Esophagus muscularis mucosa (tissue), 4 donors: ENCODE measurements at regions of chr4 and their contacts with region 1.

Region 1: DNA sequence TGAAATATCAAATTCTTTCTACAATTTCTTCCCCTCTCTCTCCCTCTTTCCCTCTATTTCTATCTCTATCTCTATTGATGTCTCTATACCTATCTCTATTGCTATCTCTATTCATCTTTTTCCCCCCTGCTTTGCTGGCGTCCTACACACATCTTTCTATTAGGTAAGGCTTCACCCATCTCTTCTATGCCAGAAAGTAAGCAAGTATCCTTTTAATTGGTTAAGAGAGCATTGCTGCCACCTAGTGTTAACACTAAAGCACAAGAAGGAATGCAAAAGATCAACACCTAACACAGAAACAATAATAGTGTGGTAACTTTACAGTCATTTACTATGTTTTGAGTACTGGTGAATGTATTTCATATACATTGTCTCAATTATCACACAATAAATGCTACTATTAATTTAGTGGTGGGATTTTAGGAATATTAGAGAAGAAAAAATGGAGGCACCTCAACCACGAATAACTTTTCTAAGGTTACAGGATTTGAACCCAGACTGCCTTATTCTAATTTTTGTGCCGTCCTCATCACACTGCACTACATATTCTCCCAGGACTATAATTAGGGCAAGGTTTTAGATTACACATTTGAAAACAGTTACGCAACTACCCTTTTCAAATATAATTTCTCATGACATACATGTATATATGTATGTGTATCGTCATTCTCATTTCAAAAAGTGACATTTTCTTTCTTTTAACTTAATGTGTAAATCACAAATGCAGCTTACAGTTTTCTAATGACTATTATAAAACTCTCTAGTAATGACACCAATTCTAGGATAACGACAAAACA is 3.7 kb upstream of the C4orf36 start:
- DNase-seq: no peak
- H3K4me3 ChIP-seq: no peak overlapping the region
- H3K27ac ChIP-seq: no peak overlapping the region
- H3K4me1 ChIP-seq: peaks cover 2 to 20% (median 14%) of the 10 kb centered on the region in 4 donors
- H3K27me3 ChIP-seq: no peaks in the 10 kb centered on the region
- CTCF ChIP-seq: peak; percentile 67 to 71 (median 71)
- EP300 ChIP-seq: no peak
- POLR2A ChIP-seq: no peak

Region 2: DNA sequence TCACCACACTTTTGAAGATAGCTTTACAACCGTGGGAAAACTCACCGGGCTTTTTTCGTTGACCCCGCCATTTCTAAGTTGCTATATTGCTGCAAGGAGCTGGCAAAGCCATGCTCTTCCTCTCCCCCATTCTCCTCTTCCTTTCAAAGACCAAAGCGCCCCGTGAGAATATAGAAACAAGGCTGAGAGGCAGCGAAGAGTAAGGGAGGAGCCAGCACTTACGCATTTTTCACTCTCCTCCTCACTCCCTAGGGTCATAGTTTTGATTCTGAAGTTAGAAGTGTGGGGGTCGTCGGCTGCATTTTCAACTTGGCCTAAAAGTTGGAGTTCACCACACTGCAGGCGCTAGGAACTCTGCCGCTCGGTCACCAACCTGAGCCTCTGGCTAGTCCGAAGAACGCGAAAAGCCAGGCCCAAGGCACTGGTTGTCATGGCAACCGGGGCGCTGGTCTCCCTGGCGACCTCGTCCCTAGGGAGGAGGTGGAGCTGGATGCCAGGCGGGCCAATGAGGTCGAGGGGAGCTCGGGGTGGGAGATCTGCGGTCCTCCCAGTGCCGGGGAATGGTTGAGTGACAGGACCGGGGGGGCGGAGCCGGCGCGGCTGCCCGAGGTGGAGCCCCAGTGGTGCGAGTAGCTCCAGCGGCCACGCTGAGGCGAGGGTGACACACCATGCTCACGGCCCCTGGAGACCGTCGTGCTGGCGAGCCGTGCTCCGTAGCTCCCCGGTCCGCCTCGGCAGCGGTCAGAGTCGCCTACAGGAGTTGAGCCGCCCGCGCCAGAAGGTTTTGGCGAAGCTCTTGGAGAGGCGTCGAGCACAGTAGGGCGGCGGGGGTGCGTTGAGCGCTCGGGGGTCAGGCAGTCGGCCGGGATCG is 302.0 kb before region 1 on chr4 and contains the start of gene PTPN13:
- intact Hi-C with region 1: loop called (anchors 10 kb)
- DNase-seq: peak; percentile 98
- H3K4me3 ChIP-seq: peak within 1 kb of the TSS; percentile 62 to 89 (median 71)
- H3K27ac ChIP-seq: peak within 1 kb of the TSS; percentile 78 to 91 (median 83)
- H3K4me1 ChIP-seq: peaks cover 0 to 52% (median 35%) of the 10 kb centered on the region in 4 donors
- H3K27me3 ChIP-seq: peaks cover 0 to 4% (median 0%) of the 10 kb centered on the region in 4 donors
- CTCF ChIP-seq: no peak
- EP300 ChIP-seq: no peak
- POLR2A ChIP-seq: no peak
- total RNA-seq, gene PTPN13: 7.9 to 13.7 (median 9.4) TPM

Region 3: DNA sequence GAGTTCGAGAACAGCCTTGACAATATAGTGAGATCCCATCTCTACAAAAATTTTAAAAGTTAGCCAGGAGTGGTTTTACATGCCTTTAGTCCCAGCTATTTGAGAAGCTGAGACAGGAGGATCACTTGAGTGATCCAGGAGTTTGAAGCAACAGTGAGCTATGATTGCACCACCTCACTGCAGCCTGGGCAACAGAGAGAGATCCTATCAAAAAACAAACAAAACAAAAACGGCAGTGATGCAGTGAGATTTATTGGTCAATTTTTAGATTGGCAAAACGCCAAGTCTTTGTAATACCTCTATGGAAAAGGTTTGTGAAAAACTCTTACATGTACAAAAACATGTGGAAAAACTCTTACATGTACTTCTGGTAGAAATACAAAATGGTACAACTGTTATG is 210.5 kb before region 1 on chr4:
- intact Hi-C with region 1: no loop called
- DNase-seq: no peak
- H3K4me3 ChIP-seq: no peak overlapping the region
- H3K27ac ChIP-seq: no peak overlapping the region
- H3K4me1 ChIP-seq: no peaks in the 10 kb centered on the region
- H3K27me3 ChIP-seq: no peaks in the 10 kb centered on the region
- CTCF ChIP-seq: no peak
- EP300 ChIP-seq: no peak
- POLR2A ChIP-seq: no peak